Naive thymus-derived CD4-positive, alpha-beta T cell (primary cell): ENCODE measurements at regions of chr14 and their contacts with region 1.

Region 1: DNA sequence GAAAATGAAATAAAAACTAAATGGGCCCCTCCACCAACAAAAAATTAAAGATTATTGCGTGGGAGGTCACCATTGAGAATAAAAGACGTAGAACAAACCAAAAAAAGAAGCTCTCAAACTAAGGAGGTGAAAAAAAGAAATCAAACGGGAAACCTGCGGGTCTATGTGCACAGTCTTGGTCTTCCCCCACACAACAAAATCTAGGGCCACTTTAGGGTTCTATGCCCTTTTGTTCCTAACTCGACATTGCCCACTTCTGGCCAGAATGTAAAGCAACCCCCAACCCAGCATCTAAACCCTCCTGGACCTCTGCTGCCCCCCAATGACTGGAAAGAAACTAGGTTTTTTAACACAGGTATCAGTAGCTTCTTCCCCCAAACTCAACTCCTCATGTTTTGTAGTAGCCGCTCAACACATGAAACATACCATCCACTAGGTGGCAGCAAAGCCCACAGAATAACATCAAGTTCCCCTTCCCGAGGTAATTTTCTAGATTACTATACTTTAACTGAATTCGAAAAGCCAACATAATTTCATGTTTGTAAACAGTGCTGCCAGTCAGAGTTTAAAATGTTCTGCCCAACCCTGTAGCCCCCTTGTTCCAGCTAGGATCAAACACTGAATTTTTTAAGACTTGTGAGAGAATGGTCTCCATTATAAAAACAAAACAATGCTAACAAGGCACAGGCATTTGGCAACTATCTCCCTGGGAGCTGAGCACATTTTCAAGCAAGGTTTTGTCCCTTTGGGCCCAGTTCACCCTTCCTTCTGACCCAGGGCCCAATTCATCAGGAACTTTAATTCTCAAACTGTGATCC is 18.7 kb downstream of the DAD1 start:
- DNase-seq: peak in 8 of 9 donors; percentile 72 to 98 (median 96)
- ATAC-seq: peak; percentile 98
- H3K4me3 ChIP-seq: peak overlapping the region; percentile 53
- H3K4me3 Mint-ChIP-seq: peak overlapping the region; percentile 68 to 95 (median 80)
- H3K27ac ChIP-seq: peak overlapping the region; percentile 87
- H3K27ac Mint-ChIP-seq: peak overlapping the region; percentile 77 to 99 (median 96)
- H3K4me1 ChIP-seq: peaks cover 49 to 51% of the 10 kb centered on the region in 2 donors
- H3K4me1 Mint-ChIP-seq: peaks cover 28 to 72% (median 68%) of the 10 kb centered on the region in 7 donors
- H3K27me3 ChIP-seq: no peaks in the 10 kb centered on the region
- H3K27me3 Mint-ChIP-seq: no peaks in the 10 kb centered on the region

Region 2: GRCh38 chr14:21768116-21768874 is 802.0 kb before region 1 on chr14:
- CTCF ChIA-PET with region 1: interaction called, 3 read pairs
- POLR2A ChIA-PET with region 1: interaction called, 3 read pairs
- intact Hi-C with region 1: loop called (anchors 1 kb)
- DNase-seq: peak in 7 of 9 donors; percentile 21 to 56 (median 41)
- ATAC-seq: peak; percentile 85
- H3K4me3 ChIP-seq: no peak overlapping the region
- H3K4me3 Mint-ChIP-seq: peak overlapping the region; percentile 42 to 81 (median 68)
- H3K27ac ChIP-seq: peak overlapping the region; percentile 6
- H3K27ac Mint-ChIP-seq: peak overlapping the region; percentile 4 to 87 (median 76)
- H3K4me1 ChIP-seq: no peaks in the 10 kb centered on the region
- H3K4me1 Mint-ChIP-seq: peaks cover 0 to 9% (median 0%) of the 10 kb centered on the region in 7 donors
- H3K27me3 ChIP-seq: no peaks in the 10 kb centered on the region
- H3K27me3 Mint-ChIP-seq: peaks cover 0 to 30% (median 5%) of the 10 kb centered on the region in 5 donors

Region 3: GRCh38 chr14:21940887-21941856 is 629.2 kb before region 1 on chr14:
- CTCF ChIA-PET with region 1: interaction called, 3 read pairs
- POLR2A ChIA-PET with region 1: interaction called, 3 read pairs
- intact Hi-C with region 1: loop called in 1 of 2 experiments (anchors 1 kb)
- DNase-seq: peak in 7 of 9 donors; percentile 42 to 56 (median 51)
- ATAC-seq: peak; percentile 78
- H3K4me3 ChIP-seq: peak overlapping the region; percentile 30
- H3K4me3 Mint-ChIP-seq: peak overlapping the region; percentile 63 to 88 (median 78)
- H3K27ac ChIP-seq: peak overlapping the region; percentile 56
- H3K27ac Mint-ChIP-seq: peak overlapping the region; percentile 79 to 95 (median 90)
- H3K4me1 ChIP-seq: peaks cover 0 to 8% of the 10 kb centered on the region in 2 donors
- H3K4me1 Mint-ChIP-seq: peaks cover 5 to 48% (median 31%) of the 10 kb centered on the region in 7 donors
- H3K27me3 ChIP-seq: no peaks in the 10 kb centered on the region
- H3K27me3 Mint-ChIP-seq: peaks cover 0 to 33% (median 0%) of the 10 kb centered on the region in 5 donors

Region 4: DNA sequence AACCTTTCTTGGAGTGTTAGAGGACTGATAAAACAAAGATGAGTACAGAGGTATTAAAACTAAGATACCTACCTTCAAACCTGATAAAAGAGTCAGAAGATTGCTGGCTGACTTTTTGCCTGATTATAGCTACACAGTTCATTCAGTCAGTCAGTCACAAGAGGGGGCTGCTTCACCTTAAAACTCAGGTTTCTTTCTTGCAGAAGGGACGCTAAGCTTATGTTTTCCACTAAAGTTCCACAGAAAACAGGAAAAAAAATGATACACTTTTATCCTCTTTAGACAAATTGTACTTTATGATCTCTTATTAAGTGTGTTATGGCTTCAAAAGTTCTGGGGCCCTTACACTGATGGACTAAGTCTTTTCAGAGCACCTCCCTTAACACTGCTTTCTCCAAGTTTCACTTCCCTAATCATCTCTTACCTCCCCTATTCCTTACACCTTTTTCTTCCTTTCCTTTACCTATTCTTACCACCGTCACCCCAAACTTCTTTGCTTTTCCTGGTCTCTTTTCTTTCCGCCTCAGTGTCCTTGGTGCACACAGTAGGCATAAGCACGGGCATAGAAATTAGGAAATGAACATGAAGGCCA is 448.0 kb before region 1 on chr14:
- CTCF ChIA-PET with region 1: interaction called, 4 read pairs
- POLR2A ChIA-PET with region 1: interaction called, 4 read pairs
- intact Hi-C with region 1: loop called in 1 of 2 experiments (anchors 2 kb)
- DNase-seq: peak in 3 of 9 donors; percentile 26 to 46 (median 37)
- ATAC-seq: no peak
- H3K4me3 ChIP-seq: peak overlapping the region; percentile 20
- H3K4me3 Mint-ChIP-seq: peak overlapping the region; percentile 72 to 95 (median 85)
- H3K27ac ChIP-seq: peak overlapping the region; percentile 71
- H3K27ac Mint-ChIP-seq: peak overlapping the region in 8 of 9 donors; percentile 84 to 95 (median 91)
- H3K4me1 ChIP-seq: no peaks in the 10 kb centered on the region
- H3K4me1 Mint-ChIP-seq: peaks cover 0 to 30% (median 18%) of the 10 kb centered on the region in 7 donors
- H3K27me3 ChIP-seq: no peaks in the 10 kb centered on the region
- H3K27me3 Mint-ChIP-seq: peaks cover 0 to 7% (median 0%) of the 10 kb centered on the region in 5 donors

Region 5: DNA sequence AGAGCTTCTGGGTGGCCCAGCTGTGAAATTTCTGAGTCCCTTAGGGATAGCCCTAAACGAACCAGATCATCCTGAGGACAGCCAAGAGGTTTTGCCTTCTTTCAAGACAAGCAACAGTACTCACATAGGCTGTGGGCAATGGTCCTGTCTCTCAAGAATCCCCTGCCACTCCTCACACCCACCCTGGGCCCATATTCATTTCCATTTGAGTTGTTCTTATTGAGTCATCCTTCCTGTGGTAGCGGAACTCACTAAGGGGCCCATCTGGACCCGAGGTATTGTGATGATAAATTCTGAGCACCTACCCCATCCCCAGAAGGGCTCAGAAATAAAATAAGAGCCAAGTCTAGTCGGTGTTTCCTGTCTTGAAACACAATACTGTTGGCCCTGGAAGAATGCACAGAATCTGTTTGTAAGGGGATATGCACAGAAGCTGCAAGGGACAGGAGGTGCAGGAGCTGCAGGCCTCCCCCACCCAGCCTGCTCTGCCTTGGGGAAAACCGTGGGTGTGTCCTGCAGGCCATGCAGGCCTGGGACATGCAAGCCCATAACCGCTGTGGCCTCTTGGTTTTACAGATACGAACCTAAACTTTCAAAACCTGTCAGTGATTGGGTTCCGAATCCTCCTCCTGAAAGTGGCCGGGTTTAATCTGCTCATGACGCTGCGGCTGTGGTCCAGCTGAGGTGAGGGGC is 20.2 kb before region 1 on chr14:
- CTCF ChIA-PET with region 1: interaction called, 385 read pairs
- POLR2A ChIA-PET with region 1: interaction called, 223 read pairs
- intact Hi-C with region 1: no loop called
- DNase-seq: peak in 8 of 9 donors; percentile 54 to 86 (median 62)
- ATAC-seq: peak; percentile 57
- H3K4me3 ChIP-seq: peak overlapping the region; percentile 47
- H3K4me3 Mint-ChIP-seq: peak overlapping the region; percentile 79 to 92 (median 82)
- H3K27ac ChIP-seq: peak overlapping the region; percentile 96
- H3K27ac Mint-ChIP-seq: peak overlapping the region; percentile 93 to 99 (median 96)
- H3K4me1 ChIP-seq: peaks cover 97 to 98% of the 10 kb centered on the region in 2 donors
- H3K4me1 Mint-ChIP-seq: peaks cover 67 to 98% (median 96%) of the 10 kb centered on the region in 7 donors
- H3K27me3 ChIP-seq: no peaks in the 10 kb centered on the region
- H3K27me3 Mint-ChIP-seq: no peaks in the 10 kb centered on the region

Region 6: DNA sequence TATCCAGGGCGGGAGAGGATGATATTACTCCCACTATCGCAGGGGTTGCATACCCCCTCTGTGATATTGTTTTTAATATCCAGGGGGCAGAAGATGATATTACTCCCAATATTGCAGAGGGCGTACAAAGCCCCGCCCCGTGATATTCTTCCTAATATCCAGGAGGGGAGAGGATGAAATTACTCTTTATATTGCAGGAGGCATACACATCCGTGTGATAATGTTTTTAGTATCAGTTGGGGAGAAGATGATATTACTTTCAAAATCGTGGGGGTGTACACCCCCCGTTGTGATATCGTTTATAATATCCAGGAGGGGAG is 143.2 kb after region 1 on chr14:
- CTCF ChIA-PET with region 1: interaction called, 3 read pairs
- POLR2A ChIA-PET with region 1: no interaction called
- intact Hi-C with region 1: loop called in 1 of 2 experiments (anchors 1 kb)
- DNase-seq: no peak
- ATAC-seq: no peak
- H3K4me3 ChIP-seq: peak overlapping the region; percentile 34
- H3K4me3 Mint-ChIP-seq: peak overlapping the region; percentile 79 to 92 (median 88)
- H3K27ac ChIP-seq: no peak overlapping the region
- H3K27ac Mint-ChIP-seq: peak overlapping the region in 4 of 9 donors; percentile 32 to 76 (median 64)
- H3K4me1 ChIP-seq: peaks cover 4 to 6% of the 10 kb centered on the region in 2 donors
- H3K4me1 Mint-ChIP-seq: peaks cover 3 to 17% (median 11%) of the 10 kb centered on the region in 7 donors
- H3K27me3 ChIP-seq: no peaks in the 10 kb centered on the region
- H3K27me3 Mint-ChIP-seq: peaks cover 27 to 44% (median 34%) of the 10 kb centered on the region in 5 donors

Region 7: DNA sequence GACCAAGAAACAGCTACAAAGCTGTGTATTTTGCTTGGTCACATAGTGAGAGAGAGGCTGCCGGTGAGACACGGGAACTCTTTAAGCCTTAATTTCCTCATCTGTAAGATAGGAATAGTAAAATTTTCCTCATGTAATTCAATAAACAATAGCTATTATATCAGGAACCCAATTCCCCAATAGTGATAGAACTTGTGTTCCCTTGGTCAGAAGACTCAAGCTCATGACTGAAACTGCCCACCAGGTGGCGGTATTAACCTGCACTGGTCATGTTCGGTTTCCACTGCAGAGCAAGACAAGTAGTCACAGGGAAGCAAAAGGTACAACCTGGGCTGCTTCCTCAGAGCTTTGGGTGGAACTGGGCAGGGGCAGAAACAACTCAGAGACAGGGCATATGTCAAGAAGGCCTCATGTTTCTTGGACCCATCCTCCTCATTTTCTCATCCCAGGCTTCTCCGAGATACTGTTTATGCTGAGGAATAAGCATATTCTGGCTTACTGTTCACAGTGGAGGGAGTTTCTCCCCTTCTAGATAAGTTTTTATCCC is 416.2 kb after region 1 on chr14:
- CTCF ChIA-PET with region 1: interaction called, 13 read pairs
- POLR2A ChIA-PET with region 1: interaction called, 3 read pairs
- intact Hi-C with region 1: loop called (anchors 1 kb)
- DNase-seq: peak; percentile 65 to 87 (median 82)
- ATAC-seq: peak; percentile 79
- H3K4me3 ChIP-seq: no peak overlapping the region
- H3K4me3 Mint-ChIP-seq: no peak overlapping the region
- H3K27ac ChIP-seq: no peak overlapping the region
- H3K27ac Mint-ChIP-seq: peak overlapping the region in 4 of 9 donors; percentile 2 to 39 (median 24)
- H3K4me1 ChIP-seq: peaks cover 0 to 8% of the 10 kb centered on the region in 2 donors
- H3K4me1 Mint-ChIP-seq: peaks cover 0 to 5% (median 0%) of the 10 kb centered on the region in 7 donors
- H3K27me3 ChIP-seq: no peaks in the 10 kb centered on the region
- H3K27me3 Mint-ChIP-seq: no peaks in the 10 kb centered on the region